GM12878 (cell line): ENCODE measurements at regions of chr3 and their contacts with region 1.

Region 1: GRCh38 chr3:32947789-32948238 is 3.6 kb upstream of the CCR4 start:
- DNase-seq: peak; percentile 61
- ATAC-seq: peak; percentile 98
- H3K4me3 ChIP-seq: no peak overlapping the region
- H3K27ac ChIP-seq: no peak overlapping the region
- H3K4me1 ChIP-seq: peaks cover 7% of the 10 kb centered on the region; the same call in 1 of the 2 replicates
- H3K27me3 ChIP-seq: no peaks in the 10 kb centered on the region
- CTCF ChIP-seq: peak; percentile 81 to 95 (median 86)
- EP300 ChIP-seq: no peak
- POLR2A ChIP-seq: no peak
- RAD21 ChIP-seq: peak; percentile 99

Region 2: DNA sequence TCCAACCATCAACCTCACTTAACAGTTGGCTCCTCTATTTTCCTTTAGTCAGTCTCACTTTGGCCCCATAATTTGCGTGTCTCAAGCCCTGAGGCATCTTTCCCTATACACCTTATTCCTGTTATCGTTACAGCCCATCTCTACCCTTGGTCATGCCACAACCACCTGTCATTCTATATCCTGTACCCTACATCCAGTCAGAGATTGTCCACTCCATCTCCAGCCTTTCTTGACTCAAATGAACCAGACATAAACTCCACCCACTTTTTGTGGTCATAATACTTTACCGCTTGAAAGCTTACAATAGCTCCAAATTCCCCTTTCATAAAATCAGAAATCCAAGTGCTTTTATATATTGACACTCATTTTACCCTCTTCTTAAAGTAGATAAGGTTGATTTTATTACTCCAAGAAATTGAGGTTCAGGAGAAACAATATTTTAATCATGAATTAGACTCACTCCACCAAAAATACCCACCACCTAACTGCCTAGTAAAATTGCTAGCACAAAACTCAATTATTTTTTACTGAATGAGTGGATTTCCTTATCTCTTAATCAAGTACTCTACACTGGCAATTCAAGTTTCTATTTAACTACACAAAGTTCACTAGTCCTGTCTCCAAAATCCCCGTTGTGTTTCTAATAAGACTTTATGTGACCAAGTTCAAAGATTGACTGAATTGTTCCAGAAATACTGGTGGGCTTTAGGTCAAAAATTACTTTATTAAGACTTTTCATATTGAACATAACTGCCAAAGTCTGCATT is 12.8 kb after region 1 on chr3:
- CTCF ChIA-PET with region 1: interaction called, 8 read pairs
- POLR2A ChIA-PET with region 1: no interaction called
- RAD21 ChIA-PET with region 1: interaction called, 3 read pairs
- SMC1A ChIA-PET with region 1: interaction called, 10 read pairs
- in situ Hi-C with region 1: no loop called
- intact Hi-C with region 1: no loop called
- DNase-seq: no peak
- ATAC-seq: peak; percentile 95
- H3K4me3 ChIP-seq: no peak overlapping the region
- H3K27ac ChIP-seq: no peak overlapping the region
- H3K4me1 ChIP-seq: peaks cover 5% of the 10 kb centered on the region
- H3K27me3 ChIP-seq: no peaks in the 10 kb centered on the region
- CTCF ChIP-seq: no peak
- EP300 ChIP-seq: no peak
- POLR2A ChIP-seq: no peak
- RAD21 ChIP-seq: no peak

Region 3: GRCh38 chr3:33030802-33031201 is 83.0 kb after region 1 on chr3:
- CTCF ChIA-PET with region 1: interaction called, 14 read pairs
- POLR2A ChIA-PET with region 1: no interaction called
- RAD21 ChIA-PET with region 1: interaction called, 3 read pairs
- SMC1A ChIA-PET with region 1: no interaction called
- in situ Hi-C with region 1: no loop called
- intact Hi-C with region 1: loop called (anchors 1 kb)
- DNase-seq: no peak
- ATAC-seq: peak; percentile 77
- H3K4me3 ChIP-seq: no peak overlapping the region
- H3K27ac ChIP-seq: no peak overlapping the region
- H3K4me1 ChIP-seq: no peaks in the 10 kb centered on the region
- H3K27me3 ChIP-seq: no peaks in the 10 kb centered on the region
- CTCF ChIP-seq: peak in 2 of 3 experiments; percentile 4 to 8; a peak in 1 of 6 replicates
- EP300 ChIP-seq: no peak
- POLR2A ChIP-seq: no peak
- RAD21 ChIP-seq: peak; percentile 46; the same call in 1 of the 2 replicates

Region 4: DNA sequence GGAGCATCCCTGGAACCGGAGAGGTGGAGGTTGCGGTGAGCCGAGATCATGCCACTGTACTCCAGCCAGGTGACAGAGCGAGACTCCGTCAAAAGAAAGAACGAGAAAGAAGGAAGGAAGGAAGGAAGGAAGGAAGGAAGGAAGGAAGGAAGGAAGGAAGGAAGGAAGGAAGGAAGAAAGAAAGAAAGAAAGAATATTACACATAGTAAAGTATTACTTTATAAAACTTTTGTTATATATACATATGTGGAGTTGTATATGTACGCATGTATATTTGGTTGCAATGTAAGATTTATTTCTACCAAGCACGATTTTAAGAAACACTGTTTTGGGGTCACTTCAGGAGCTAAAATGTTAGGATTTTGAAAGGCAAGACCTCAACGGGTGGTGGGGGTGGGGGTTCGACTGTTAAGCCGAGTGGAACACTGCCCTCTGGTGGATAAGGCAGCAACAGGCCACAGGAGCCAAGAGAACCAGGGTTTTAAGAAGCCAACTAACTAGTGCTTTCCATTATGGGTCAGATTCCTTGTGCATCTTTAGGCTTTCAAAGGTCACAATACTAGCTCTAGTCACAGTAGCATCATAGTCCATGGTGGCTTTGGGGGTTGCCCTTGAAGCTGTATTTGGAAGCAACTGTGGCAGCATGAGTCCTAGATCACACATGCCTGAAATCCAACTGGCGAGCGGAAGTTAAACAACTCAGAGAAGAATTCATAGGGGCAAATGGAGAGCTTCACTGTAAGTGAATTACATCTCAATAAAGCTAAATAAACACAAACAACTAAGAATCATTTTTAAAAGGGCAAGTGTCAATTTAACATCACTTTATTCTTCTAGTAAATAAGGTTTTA is 126.6 kb after region 1 on chr3:
- CTCF ChIA-PET with region 1: interaction called, 182 read pairs
- POLR2A ChIA-PET with region 1: no interaction called
- RAD21 ChIA-PET with region 1: interaction called, 67 read pairs
- SMC1A ChIA-PET with region 1: interaction called, 92 read pairs
- in situ Hi-C with region 1: no loop called
- intact Hi-C with region 1: loop called (anchors 1 kb)
- DNase-seq: no peak
- ATAC-seq: peak; percentile 97
- H3K4me3 ChIP-seq: no peak overlapping the region
- H3K27ac ChIP-seq: no peak overlapping the region
- H3K4me1 ChIP-seq: no peaks in the 10 kb centered on the region
- H3K27me3 ChIP-seq: no peaks in the 10 kb centered on the region
- CTCF ChIP-seq: peak; percentile 88 to 94 (median 93)
- EP300 ChIP-seq: no peak
- POLR2A ChIP-seq: no peak
- RAD21 ChIP-seq: peak; percentile 92

Region 5: GRCh38 chr3:33131331-33132018 is 183.7 kb after region 1 on chr3:
- CTCF ChIA-PET with region 1: interaction called, 25 read pairs
- POLR2A ChIA-PET with region 1: no interaction called
- RAD21 ChIA-PET with region 1: interaction called, 9 read pairs
- SMC1A ChIA-PET with region 1: interaction called, 7 read pairs
- in situ Hi-C with region 1: no loop called
- intact Hi-C with region 1: loop called (anchors 5 kb)
- DNase-seq: no peak
- ATAC-seq: peak; percentile 92
- H3K4me3 ChIP-seq: no peak overlapping the region
- H3K27ac ChIP-seq: no peak overlapping the region
- H3K4me1 ChIP-seq: no peaks in the 10 kb centered on the region
- H3K27me3 ChIP-seq: no peaks in the 10 kb centered on the region
- CTCF ChIP-seq: peak; percentile 55 to 85 (median 72)
- EP300 ChIP-seq: no peak
- POLR2A ChIP-seq: no peak
- RAD21 ChIP-seq: peak; percentile 93

Region 6: DNA sequence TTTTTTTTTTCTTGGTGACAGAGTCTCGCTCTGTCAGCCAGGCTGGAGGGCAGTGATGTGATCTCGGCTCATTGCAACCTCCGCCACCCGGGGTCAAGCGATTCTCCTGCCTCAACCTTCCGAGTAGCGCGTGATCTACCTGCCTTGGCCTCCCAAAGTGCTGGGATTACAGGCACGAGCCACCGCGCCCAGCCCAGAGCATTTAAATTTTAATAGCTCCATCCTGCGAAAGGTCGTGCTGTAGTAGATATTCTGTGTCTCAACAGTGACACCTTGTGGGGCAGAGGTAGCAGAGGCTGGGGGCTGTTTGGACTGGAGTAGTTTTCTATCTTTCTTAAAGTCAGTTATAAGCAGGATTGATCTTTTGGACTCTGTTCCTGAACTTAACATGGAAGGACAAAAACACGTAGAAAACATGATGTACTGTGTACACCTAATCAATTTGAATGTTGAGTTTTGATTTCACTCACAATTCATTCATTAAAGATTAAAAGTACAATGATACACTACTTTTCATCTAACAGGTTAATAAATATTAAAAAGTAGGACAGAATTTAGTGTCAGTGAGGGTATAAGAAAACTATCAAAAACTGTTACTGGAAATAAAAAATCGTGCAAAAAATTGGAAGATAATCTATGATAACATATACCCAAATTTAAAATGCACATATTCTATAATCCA is 839.7 kb after region 1 on chr3:
- CTCF ChIA-PET with region 1: interaction called, 3 read pairs
- POLR2A ChIA-PET with region 1: no interaction called
- RAD21 ChIA-PET with region 1: interaction called, 4 read pairs
- SMC1A ChIA-PET with region 1: interaction called, 7 read pairs
- in situ Hi-C with region 1: loop called (anchors 10 kb)
- intact Hi-C with region 1: no loop called
- DNase-seq: no peak
- ATAC-seq: peak; percentile 93
- H3K4me3 ChIP-seq: peak overlapping the region; percentile 50; the same call in 1 of the 2 replicates
- H3K27ac ChIP-seq: no peak overlapping the region
- H3K4me1 ChIP-seq: peaks cover 4% of the 10 kb centered on the region; the same call in 1 of the 2 replicates
- H3K27me3 ChIP-seq: no peaks in the 10 kb centered on the region
- CTCF ChIP-seq: peak; percentile 75 to 89 (median 83)
- EP300 ChIP-seq: no peak
- POLR2A ChIP-seq: no peak
- RAD21 ChIP-seq: peak; percentile 86